Transverse colon (tissue), 4 donors: ENCODE measurements at regions of chr14 and their contacts with region 1.

Region 1: DNA sequence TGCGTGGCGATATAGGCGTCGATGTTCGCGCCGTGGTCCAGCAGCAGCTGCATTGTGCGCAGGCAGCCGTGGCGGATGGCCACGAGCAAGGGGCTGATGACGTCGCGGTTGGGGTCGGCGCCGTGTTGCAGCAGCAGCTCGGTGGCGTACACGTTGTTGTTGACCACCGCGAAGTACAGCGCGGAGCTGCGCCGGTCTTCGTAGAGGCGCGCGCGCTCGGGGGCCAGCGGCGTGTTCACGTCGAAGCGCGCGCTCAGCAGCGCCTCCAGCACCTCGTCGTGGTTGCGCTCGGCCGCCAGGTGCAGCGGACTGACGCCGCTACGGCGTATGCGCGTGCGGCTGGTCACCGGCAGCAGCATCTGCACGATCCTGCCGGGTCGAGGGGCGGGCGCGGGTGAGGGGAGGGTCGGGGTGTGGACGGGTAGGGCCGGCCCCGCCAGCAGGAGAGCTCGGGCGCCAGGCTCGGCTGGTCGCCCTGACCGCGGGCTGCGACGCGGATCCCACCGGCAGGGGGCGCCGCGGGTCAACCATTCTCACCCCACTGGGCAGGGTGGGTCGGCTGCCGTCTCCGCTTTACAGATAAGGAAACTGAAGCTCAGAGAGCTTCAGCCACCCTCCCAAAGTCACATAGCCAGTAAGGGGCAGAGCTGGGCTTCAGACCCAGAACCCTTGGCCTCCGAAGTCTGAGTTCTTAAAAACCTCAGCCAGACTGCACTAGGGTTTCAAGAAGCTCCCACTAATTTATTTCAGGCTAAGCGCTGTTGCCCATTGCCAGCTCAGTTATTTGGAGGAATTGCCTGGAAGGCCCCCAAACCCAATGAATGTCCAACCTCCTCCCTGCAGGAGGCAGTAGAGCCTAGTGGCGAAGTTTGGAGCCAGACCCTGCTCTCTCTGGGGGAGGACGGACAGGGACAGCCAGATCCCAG is 12.4 kb downstream of the FAM181A start:
- DNase-seq: peak; percentile 87
- H3K4me3 ChIP-seq: peak overlapping the region in 2 of 4 donors; percentile 23 to 37
- H3K27ac ChIP-seq: peak overlapping the region; percentile 25 to 78 (median 48)
- H3K4me1 ChIP-seq: peaks cover 0 to 9% (median 4%) of the 10 kb centered on the region in 4 donors
- H3K27me3 ChIP-seq: peaks cover 10% of the 10 kb centered on the region
- CTCF ChIP-seq: peak; percentile 58 to 87 (median 81)
- EP300 ChIP-seq: no peak
- POLR2A ChIP-seq: no peak

Region 2: DNA sequence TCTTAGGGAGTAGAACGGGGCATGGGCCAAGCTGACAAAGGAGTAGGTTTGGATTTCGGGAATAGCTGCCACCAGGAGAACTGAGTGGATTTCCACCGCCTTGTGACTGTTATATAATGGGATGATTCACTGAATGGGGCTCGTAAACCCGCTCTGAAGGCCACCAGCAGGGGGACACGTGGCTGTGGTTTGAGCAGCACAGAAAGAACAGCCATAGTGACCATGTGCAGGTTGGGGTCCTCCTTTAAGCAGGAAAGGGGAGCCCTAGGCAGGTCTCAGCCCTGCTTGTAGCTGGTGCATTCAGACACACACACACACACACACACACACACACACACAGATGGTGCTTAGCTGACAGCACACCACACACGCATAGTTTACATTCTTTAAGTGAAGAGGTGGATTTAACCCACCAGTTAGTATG is 45.4 kb after region 1 on chr14:
- in situ Hi-C with region 1: no loop called
- intact Hi-C with region 1: no loop called
- DNase-seq: peak; percentile 48
- H3K4me3 ChIP-seq: no peak overlapping the region
- H3K27ac ChIP-seq: peak overlapping the region in 3 of 4 donors; percentile 49 to 63 (median 55)
- H3K4me1 ChIP-seq: peaks cover 6 to 17% (median 12%) of the 10 kb centered on the region in 4 donors
- H3K27me3 ChIP-seq: no peaks in the 10 kb centered on the region
- CTCF ChIP-seq: peak; percentile 31 to 56 (median 42)
- EP300 ChIP-seq: no peak
- POLR2A ChIP-seq: no peak

Region 3: GRCh38 chr14:94001501-94002396 is 62.2 kb after region 1 on chr14:
- in situ Hi-C with region 1: loop called in 3 of 4 experiments (anchors 5 kb)
- intact Hi-C with region 1: loop called (anchors 2 kb)
- DNase-seq: peak; percentile 59
- H3K4me3 ChIP-seq: no peak overlapping the region
- H3K27ac ChIP-seq: peak overlapping the region in 1 of 4 donors; percentile 41
- H3K4me1 ChIP-seq: peaks cover 0 to 8% (median 0%) of the 10 kb centered on the region in 4 donors
- H3K27me3 ChIP-seq: no peaks in the 10 kb centered on the region
- CTCF ChIP-seq: peak; percentile 90 to 98 (median 95)
- EP300 ChIP-seq: no peak
- POLR2A ChIP-seq: no peak

Region 4: GRCh38 chr14:94051115-94051514 is 111.5 kb after region 1 on chr14:
- in situ Hi-C with region 1: no loop called
- intact Hi-C with region 1: no loop called
- DNase-seq: peak; percentile 56
- H3K4me3 ChIP-seq: no peak overlapping the region
- H3K27ac ChIP-seq: no peak overlapping the region
- H3K4me1 ChIP-seq: peaks cover 0 to 7% (median 0%) of the 10 kb centered on the region in 4 donors
- H3K27me3 ChIP-seq: no peaks in the 10 kb centered on the region
- CTCF ChIP-seq: peak; percentile 33 to 50 (median 42)
- EP300 ChIP-seq: no peak
- POLR2A ChIP-seq: no peak